GM10248 (cell line): ENCODE measurements at regions of chr20 and their contacts with region 1.

Region 1: DNA sequence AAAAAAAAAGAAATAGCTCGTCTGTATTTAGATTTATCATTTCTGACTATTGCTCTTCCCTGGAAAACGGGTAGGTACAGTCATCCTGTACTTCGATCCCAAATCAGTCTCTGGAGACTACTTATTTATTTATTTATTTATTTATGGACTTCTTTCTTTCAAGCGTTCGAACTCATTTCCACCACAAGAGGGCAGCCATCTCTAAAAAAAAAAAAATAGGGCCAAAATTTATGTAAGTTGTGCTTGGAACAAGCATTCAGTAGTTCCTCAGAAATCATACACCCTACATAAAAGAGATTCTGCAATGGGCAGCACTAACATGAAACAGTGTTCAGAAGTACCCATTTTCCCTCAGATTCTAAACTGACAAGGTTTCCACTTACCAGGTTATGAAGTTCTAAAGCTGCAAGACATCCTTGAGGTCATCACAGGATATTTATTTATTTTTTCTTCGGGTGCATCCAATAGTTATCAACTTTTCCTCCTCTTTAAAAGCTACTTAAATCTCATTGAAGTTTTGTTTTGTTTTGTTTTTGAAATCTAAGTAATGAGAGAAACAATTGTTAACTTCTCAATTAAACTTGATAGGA is 1.9 kb upstream of the BMP2 start:
- DNase-seq: peak; percentile 29
- CTCF ChIP-seq: peak; percentile 46

Region 2: DNA sequence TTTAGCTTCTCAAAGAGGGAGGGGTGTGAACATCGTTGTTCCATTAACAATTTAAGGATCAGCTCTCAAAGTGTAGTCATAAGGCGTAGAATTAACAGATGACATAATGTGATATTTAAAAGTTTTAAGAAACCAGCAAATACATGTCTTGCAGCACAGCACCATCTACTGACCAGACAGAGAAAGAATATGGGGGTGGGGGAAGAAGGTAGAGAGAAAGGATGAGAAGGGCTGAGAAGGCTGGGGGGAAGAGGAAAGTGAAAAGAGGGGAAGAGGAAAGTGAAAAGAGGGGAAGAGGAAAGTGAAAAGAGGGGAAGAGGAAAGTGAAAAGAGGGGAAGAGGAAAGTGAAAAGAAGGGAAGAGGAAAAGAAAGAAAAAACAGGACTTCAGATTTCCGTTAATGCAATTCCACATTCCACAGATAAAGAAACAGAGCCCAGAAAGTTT is 1093.8 kb after region 1 on chr20:
- CTCF ChIA-PET with region 1: interaction called, 11 read pairs
- POLR2A ChIA-PET with region 1: no interaction called
- DNase-seq: peak; percentile 6
- CTCF ChIP-seq: peak; percentile 69